GM18951 (cell line): ENCODE measurements at regions of chr2 and their contacts with region 1.

Region 1: DNA sequence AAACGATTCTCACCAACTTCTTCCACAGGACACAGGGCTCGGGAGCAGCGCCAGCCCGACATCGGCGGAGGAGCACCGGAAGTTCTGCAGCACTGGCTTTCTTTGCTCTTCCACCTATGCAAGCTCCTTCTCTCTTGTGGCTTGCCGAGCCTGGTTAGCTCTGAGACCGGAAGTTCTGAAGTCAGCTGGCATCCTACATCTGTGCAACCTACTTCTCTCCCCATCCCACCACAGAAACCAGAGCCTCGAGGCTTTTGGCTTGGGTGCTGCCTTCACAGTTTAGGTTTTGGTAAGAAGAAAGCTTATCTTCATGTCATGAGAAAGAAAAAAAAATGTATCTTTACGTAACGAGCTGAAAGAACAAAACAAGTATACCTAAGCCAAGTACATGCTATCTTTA is 111.7 kb downstream of the ANKRD44 start:
- POLR2A ChIP-seq: peak; percentile 69

Region 2: DNA sequence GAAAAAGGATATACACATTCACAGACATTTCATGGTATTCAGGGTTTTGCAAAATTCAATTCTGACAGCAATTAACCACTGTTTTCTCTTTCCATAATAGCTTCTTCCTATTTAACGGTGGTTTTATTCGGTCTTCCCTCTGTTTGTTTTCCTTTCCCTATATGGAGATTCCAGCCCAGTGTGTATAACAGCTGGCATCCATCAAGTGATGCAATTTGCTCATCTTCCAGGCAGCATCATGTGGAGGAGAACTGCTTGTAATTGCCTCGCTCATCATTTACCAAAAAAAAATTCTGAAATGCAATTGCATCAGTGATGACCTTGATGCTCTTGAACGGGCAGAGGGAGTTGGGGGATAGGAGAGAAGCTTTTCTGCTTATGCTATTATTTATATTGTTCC is 106.5 kb before region 1 on chr2:
- in situ Hi-C with region 1: no loop called
- POLR2A ChIP-seq: no peak

Region 3: DNA sequence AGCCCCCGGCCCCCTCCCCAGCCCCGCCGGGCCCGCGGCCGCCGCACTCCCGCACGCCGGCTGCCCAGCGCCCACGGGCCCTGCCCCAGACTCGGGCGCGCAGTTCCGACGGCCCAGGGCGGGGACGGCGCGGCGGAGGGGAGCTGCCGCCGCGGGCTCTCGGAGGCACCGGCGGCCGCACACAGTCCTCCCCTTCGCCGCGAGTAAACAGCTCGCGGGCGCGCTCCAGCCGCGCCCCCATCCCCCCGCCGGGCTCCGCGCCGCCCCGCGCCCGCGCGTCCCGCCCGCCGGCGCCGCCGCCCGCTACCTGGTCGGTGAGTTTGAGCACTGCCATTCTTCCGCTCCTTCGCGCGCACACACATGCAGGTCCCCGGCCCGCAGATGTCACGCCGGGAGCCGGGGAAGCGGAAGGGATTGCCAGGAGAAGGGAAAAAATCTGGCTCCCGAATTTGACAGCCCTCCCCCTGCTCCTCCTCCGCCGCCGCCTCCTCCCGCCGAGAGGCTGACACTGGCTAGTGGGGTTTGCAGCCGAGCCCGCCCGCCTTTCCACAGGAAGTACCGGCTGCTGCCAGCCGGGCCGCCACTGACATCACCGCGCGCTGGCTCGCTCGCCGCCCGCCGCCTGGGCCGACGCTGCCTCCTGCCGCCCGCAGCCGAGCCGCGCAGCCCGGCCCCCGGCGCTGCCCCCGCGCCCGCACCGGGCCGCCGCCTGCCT is 111.5 kb after region 1 on chr2 and contains the start of gene ANKRD44:
- in situ Hi-C with region 1: loop called (anchors 5 kb)
- POLR2A ChIP-seq: peak; percentile 72